CD8-positive, alpha-beta memory T cell (primary cell): ENCODE measurements at regions of chr1 and their contacts with region 1.

Region 1: GRCh38 chr1:245045087-245045881 is 109.5 kb upstream of the KIF26B start:
- DNase-seq: no peak
- H3K4me3 ChIP-seq: no peak overlapping the region
- H3K4me3 Mint-ChIP-seq: no peak overlapping the region
- H3K27ac ChIP-seq: no peak overlapping the region
- H3K27ac Mint-ChIP-seq: no peak overlapping the region
- H3K4me1 ChIP-seq: no peaks in the 10 kb centered on the region
- H3K4me1 Mint-ChIP-seq: no peaks in the 10 kb centered on the region
- H3K27me3 ChIP-seq: no peaks in the 10 kb centered on the region
- H3K27me3 Mint-ChIP-seq: peaks cover 0 to 1% of the 10 kb centered on the region in 2 donors

Region 2: DNA sequence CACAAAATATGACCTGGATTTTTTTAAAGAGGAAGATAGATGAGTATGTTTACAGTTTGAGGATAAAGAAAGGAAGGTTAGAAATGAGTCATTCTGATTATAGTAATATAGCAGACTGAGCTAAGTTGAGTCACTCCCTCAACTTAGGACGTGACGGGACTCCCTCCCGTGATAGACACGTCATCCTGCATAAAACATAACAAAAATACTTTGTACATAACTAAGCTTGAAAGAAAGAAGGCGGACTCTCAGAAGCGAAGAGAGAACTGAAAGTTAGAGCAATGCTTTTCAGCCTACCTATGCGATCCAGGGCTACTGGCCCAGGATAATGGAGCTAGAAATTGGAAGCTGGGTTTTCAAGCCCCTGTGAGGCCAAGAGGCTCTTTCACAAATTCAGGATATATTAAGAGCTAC is 445.3 kb before region 1 on chr1:
- CTCF ChIA-PET with region 1: interaction called, 43 read pairs
- POLR2A ChIA-PET with region 1: no interaction called
- DNase-seq: peak in 1 of 5 donors; percentile 70
- H3K4me3 ChIP-seq: no peak overlapping the region
- H3K4me3 Mint-ChIP-seq: peak overlapping the region in 2 of 7 donors; percentile 36 to 67
- H3K27ac ChIP-seq: no peak overlapping the region
- H3K27ac Mint-ChIP-seq: peak overlapping the region in 5 of 8 donors; percentile 16 to 77 (median 58)
- H3K4me1 ChIP-seq: no peaks in the 10 kb centered on the region
- H3K4me1 Mint-ChIP-seq: peaks cover 3 to 10% (median 6%) of the 10 kb centered on the region in 3 donors
- H3K27me3 ChIP-seq: no peaks in the 10 kb centered on the region
- H3K27me3 Mint-ChIP-seq: peaks cover 1 to 10% of the 10 kb centered on the region in 2 donors

Region 3: DNA sequence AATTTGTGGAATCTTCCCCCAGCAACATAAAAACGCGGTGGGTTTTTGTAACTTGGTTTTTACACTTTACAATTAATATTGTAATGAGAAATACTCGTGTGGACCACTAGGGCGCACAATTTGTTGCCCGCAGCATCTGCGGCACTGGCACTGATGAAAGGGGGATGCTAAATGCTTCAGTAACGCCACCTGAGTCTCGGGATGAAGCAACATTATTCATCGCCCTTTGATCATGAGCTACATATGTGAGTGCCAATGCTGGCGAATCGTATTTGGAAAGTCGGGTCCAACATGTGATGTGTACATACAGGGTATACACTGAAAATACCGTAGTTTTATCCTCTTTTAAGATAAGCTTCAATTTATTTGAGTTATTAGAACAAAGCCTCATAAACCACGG is 244.0 kb before region 1 on chr1:
- CTCF ChIA-PET with region 1: interaction called, 66 read pairs
- POLR2A ChIA-PET with region 1: interaction called, 6 read pairs
- DNase-seq: peak; percentile 25 to 69 (median 42)
- H3K4me3 ChIP-seq: no peak overlapping the region
- H3K4me3 Mint-ChIP-seq: peak overlapping the region in 1 of 7 donors; percentile 54
- H3K27ac ChIP-seq: no peak overlapping the region
- H3K27ac Mint-ChIP-seq: peak overlapping the region in 2 of 8 donors; percentile 22 to 73
- H3K4me1 ChIP-seq: no peaks in the 10 kb centered on the region
- H3K4me1 Mint-ChIP-seq: peaks cover 4 to 5% (median 4%) of the 10 kb centered on the region in 3 donors
- H3K27me3 ChIP-seq: no peaks in the 10 kb centered on the region
- H3K27me3 Mint-ChIP-seq: peaks cover 5 to 22% of the 10 kb centered on the region in 2 donors

Region 4: GRCh38 chr1:244835276-244836134 is 209.8 kb before region 1 on chr1 and contains the start of gene COX20:
- CTCF ChIA-PET with region 1: interaction called, 15 read pairs
- POLR2A ChIA-PET with region 1: interaction called, 8 read pairs
- DNase-seq: peak; percentile 81 to 95 (median 91)
- H3K4me3 ChIP-seq: peak within 1 kb of the TSS; percentile 96
- H3K4me3 Mint-ChIP-seq: peak within 1 kb of the TSS; percentile 88 to 100 (median 99)
- H3K27ac ChIP-seq: peak within 1 kb of the TSS; percentile 98
- H3K27ac Mint-ChIP-seq: peak within 1 kb of the TSS; percentile 96 to 100 (median 99)
- H3K4me1 ChIP-seq: peaks cover 44% of the 10 kb centered on the region
- H3K4me1 Mint-ChIP-seq: peaks cover 45 to 56% (median 52%) of the 10 kb centered on the region in 3 donors
- H3K27me3 ChIP-seq: no peaks in the 10 kb centered on the region
- H3K27me3 Mint-ChIP-seq: peaks cover 0 to 1% of the 10 kb centered on the region in 2 donors
- total RNA-seq, gene COX20: 35.7 to 36.2 TPM

Region 5: DNA sequence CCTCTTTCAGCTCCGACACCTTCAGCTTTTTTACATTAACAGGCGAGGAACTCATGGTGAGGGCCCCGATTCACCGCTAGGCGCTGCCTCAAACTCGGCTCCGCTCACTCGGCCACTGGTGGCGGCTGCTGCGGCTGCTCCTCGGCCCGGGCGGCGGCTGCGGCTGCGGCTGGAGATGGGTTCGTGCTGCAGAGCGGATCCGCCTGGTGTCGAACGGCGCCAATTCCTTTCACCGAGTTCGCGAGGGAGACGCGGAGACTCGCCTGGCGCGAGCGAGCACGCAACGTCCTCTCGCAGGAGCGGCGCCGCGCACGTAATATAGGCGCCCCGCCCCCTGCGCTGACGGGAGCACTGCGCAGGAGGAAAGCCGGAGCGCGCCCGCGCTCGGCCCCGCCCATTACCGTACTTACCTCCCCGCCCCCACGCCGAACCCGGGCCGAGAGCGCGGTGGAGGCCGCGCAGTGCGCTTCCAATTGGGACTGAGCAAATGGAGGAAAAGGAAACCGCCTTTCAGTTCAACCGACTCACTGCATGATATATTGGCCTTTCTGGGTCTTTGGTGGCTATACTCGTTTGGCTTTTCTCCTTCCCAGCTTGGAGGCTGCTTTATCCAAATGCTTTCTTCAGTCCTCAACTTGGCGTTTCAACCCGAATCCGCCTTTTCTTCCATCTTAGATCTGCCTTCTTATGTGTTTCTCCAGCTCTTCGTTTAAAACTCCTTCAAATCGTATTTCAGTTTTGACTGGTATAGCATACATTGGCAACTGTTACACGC is 180.8 kb before region 1 on chr1 and contains the start of gene HNRNPU:
- CTCF ChIA-PET with region 1: interaction called, 12 read pairs
- POLR2A ChIA-PET with region 1: interaction called, 7 read pairs
- DNase-seq: peak; percentile 93 to 99 (median 97)
- H3K4me3 ChIP-seq: peak within 1 kb of the TSS; percentile 87
- H3K4me3 Mint-ChIP-seq: peak within 1 kb of the TSS; percentile 90 to 98 (median 93)
- H3K27ac ChIP-seq: peak within 1 kb of the TSS; percentile 94
- H3K27ac Mint-ChIP-seq: peak within 1 kb of the TSS; percentile 91 to 100 (median 98)
- H3K4me1 ChIP-seq: peaks cover 45% of the 10 kb centered on the region
- H3K4me1 Mint-ChIP-seq: peaks cover 34 to 52% (median 48%) of the 10 kb centered on the region in 3 donors
- H3K27me3 ChIP-seq: no peaks in the 10 kb centered on the region
- H3K27me3 Mint-ChIP-seq: peaks cover 0 to 10% of the 10 kb centered on the region in 2 donors
- total RNA-seq, gene HNRNPU: 598 to 630 TPM

Region 6: GRCh38 chr1:245000872-245001188 is 44.5 kb before region 1 on chr1:
- CTCF ChIA-PET with region 1: no interaction called
- POLR2A ChIA-PET with region 1: no interaction called
- DNase-seq: no peak
- H3K4me3 ChIP-seq: no peak overlapping the region
- H3K4me3 Mint-ChIP-seq: no peak overlapping the region
- H3K27ac ChIP-seq: no peak overlapping the region
- H3K27ac Mint-ChIP-seq: peak overlapping the region in 1 of 8 donors; percentile 37
- H3K4me1 ChIP-seq: no peaks in the 10 kb centered on the region
- H3K4me1 Mint-ChIP-seq: no peaks in the 10 kb centered on the region
- H3K27me3 ChIP-seq: no peaks in the 10 kb centered on the region
- H3K27me3 Mint-ChIP-seq: peaks cover 0 to 1% of the 10 kb centered on the region in 2 donors

Region 7: DNA sequence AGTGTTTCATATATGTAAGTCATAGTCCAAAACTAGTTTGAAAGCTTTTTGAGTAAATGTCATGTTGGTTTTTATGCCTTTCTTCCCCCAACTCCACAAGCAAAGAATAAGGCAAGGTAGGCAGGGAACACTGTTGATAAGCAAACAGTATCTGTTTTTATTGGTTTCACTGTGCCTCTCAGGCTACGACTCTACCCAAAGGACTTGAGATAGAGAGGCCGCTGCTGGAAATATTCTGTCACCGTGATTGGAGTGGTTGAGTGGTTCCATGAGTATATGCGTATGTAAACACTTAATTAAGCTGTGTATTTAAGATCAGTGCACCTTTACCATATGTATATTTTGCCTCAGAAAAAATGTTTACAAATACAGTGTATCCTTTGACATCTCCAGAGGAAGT is 28.6 kb before region 1 on chr1:
- CTCF ChIA-PET with region 1: interaction called, 11 read pairs
- POLR2A ChIA-PET with region 1: no interaction called
- DNase-seq: no peak
- H3K4me3 ChIP-seq: no peak overlapping the region
- H3K4me3 Mint-ChIP-seq: no peak overlapping the region
- H3K27ac ChIP-seq: no peak overlapping the region
- H3K27ac Mint-ChIP-seq: no peak overlapping the region
- H3K4me1 ChIP-seq: no peaks in the 10 kb centered on the region
- H3K4me1 Mint-ChIP-seq: peaks cover 0 to 3% (median 0%) of the 10 kb centered on the region in 3 donors
- H3K27me3 ChIP-seq: no peaks in the 10 kb centered on the region
- H3K27me3 Mint-ChIP-seq: no peaks in the 10 kb centered on the region

Region 8: GRCh38 chr1:245031041-245031440 is 14.2 kb before region 1 on chr1:
- CTCF ChIA-PET with region 1: interaction called, 19 read pairs
- POLR2A ChIA-PET with region 1: no interaction called
- DNase-seq: no peak
- H3K4me3 ChIP-seq: no peak overlapping the region
- H3K4me3 Mint-ChIP-seq: no peak overlapping the region
- H3K27ac ChIP-seq: no peak overlapping the region
- H3K27ac Mint-ChIP-seq: no peak overlapping the region
- H3K4me1 ChIP-seq: no peaks in the 10 kb centered on the region
- H3K4me1 Mint-ChIP-seq: peaks cover 9 to 17% (median 13%) of the 10 kb centered on the region in 3 donors
- H3K27me3 ChIP-seq: no peaks in the 10 kb centered on the region
- H3K27me3 Mint-ChIP-seq: no peaks in the 10 kb centered on the region